Activated CD4-positive, alpha-beta T cell treated with anti-CD3 and anti-CD28 coated beads for 36 hours (primary cell): ENCODE measurements at regions of chr1 and their contacts with region 1.

Region 1: DNA sequence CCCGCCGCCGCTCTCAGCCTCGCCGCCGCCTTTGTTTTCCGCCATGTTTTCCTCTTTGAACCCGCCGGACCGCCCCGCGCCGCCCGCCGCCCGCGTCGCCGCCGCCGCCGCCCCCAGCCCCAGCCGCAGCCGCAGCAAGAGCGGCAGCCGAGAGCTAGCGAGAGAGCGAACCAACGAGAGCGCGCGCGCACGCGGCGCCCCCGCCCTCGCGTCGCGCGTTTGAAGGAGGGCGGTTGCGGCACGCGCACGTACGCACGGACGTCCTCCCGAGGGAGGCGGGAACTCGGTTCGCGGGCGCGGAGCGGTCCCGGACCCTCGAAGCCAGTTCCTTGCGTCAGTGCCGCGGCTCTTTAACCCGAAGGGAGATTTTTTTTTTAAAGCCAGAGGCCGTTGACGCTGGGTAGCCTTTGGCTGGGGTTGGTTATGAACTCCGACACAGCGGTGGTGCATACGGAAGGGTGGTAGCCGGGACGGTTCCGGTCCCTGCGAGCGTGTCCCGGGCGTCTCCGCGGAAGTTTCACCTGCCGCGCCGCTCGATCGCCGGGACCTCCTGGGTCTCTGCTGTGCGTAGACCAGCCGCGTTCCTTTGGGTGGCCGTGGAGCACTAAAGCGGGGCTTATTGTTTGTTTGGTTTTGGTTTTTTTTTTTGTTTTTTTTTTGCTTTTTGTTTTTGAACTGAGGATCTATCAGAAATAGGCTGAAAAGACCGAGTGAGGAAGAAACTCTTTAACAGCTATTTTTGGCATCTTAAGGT is at the start of gene TRIM33:
- DNase-seq: peak; percentile 95
- ATAC-seq: peak; percentile 77
- H3K4me3 Mint-ChIP-seq: peak within 1 kb of the TSS; percentile 81
- H3K27ac Mint-ChIP-seq: peak within 1 kb of the TSS; percentile 98
- H3K4me1 Mint-ChIP-seq: peaks cover 43% of the 10 kb centered on the region
- H3K27me3 Mint-ChIP-seq: no peaks in the 10 kb centered on the region
- total RNA-seq, gene TRIM33: 32.5 to 41.6 TPM

Region 2: DNA sequence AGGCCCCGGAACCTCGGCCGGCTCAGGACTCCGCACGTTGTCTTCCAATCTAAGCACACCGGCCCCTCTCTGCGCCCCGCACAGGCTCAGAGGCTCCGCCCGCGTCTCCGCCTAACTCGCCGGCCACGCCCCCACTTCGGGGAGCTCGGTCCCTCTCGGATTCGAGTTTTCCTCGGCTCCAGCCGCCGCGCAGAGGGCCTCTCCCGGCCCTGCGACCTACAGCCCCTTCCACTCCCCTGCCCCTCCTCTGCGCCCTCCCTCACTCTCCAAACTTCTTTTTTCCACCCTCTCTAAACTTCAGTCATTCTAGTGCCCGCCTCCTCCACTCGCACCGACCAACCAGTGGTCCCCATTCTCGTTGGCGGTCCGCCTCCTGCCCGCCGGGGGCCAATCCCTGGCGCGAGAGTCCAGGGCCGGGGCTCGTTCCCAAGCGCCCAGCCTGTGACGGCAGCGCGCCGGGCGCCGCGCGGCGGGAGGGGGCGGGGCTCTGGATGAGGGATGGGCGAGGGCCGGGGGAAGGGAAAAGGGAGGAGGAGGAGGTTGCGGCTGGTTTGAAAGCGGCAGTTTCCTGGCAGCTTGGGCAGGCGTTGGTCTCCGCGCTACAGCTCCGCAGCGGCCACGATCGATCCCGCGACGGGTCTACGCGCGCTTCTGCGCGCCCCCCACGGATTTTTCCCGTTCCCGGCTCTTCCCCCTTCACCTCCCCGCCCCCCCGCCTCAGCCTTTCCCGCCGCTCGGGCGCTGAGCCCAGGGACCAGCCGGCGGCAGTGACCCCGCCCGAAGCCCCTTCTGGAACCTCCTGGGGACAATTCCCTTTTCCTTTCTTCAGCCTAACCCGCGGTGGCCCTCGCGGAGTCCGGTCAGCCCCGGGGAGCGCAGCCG is 1121.0 kb before region 1 on chr1 and contains the start of gene MAGI3:
- CTCF ChIA-PET with region 1: no interaction called
- POLR2A ChIA-PET with region 1: interaction called, 7 read pairs
- intact Hi-C with region 1: loop called in 1 of 2 experiments (anchors 2 kb)
- DNase-seq: peak; percentile 97
- ATAC-seq: peak; percentile 97
- H3K4me3 Mint-ChIP-seq: peak within 1 kb of the TSS; percentile 86
- H3K27ac Mint-ChIP-seq: peak within 1 kb of the TSS; percentile 79
- H3K4me1 Mint-ChIP-seq: peaks cover 23% of the 10 kb centered on the region
- H3K27me3 Mint-ChIP-seq: peaks cover 5% of the 10 kb centered on the region
- total RNA-seq, gene MAGI3: 6.4 to 6.7 TPM

Region 3: DNA sequence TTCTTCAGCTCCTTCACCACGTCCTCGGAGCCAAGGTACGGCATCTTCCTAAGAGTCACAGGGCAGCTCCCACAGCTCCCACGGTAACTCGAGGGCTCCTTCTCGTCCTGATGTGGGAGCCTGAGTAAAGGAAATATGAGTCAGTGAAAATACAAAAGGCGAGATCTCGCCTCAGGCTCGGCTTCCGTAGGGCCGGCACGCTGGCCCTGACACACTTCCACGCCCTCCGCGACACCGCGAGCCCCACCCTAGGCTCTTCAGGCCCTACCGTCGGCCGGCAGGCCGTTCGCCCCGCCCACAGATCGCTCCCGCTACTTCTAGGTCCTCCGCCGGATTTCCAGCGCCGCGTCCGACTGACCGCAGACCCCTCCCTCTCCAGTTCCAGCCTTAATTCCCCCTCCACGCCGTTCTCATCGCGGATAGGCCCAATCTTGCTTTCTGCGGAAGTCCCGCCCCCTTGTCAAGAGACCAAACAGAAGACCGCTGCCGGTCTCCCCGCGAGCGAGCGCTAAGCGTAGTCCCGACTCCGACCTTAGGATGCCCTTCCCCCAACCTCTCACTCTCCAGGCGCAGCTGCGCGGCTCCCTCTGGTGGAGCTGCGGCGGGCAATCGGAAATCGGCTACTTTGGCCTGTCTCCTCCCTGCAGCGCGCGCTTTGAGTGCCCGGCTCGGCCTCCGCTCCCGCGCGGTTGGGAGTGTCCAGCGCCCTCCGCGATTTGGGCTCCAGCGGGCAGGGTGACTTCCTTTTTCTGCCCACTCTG is 606.4 kb before region 1 on chr1 and contains the starts of genes AP4B1 and DCLRE1B:
- CTCF ChIA-PET with region 1: no interaction called
- POLR2A ChIA-PET with region 1: interaction called, 3 read pairs
- intact Hi-C with region 1: loop called (anchors 1 kb)
- DNase-seq: peak; percentile 99
- ATAC-seq: peak; percentile 92
- H3K4me3 Mint-ChIP-seq: peak within 1 kb of the TSS; percentile 85
- H3K27ac Mint-ChIP-seq: peak within 1 kb of the TSS; percentile 96
- H3K4me1 Mint-ChIP-seq: peaks cover 55% of the 10 kb centered on the region
- H3K27me3 Mint-ChIP-seq: no peaks in the 10 kb centered on the region
- total RNA-seq, gene AP4B1: 27.7 to 39.2 TPM
- total RNA-seq, gene DCLRE1B: 18.2 to 21.8 TPM

Region 4: DNA sequence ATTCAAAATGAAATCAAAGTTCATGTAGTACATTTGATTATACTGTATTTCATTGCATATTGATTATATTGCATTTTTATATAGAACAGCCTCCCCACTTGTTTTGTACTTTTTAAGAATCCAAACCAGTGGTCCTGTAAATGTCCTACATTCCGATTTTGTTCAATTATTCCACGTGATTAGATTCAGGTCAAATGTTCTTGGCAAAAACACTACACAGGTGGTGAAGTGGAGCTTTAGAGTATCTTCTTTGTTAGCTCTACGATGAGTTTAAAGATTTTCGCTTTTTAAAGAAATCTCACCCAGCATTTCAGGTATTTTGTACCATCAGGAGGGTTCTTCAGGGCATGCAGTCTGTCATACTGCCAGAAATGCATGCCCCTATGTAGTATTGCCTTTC is 120.8 kb before region 1 on chr1:
- CTCF ChIA-PET with region 1: no interaction called
- POLR2A ChIA-PET with region 1: no interaction called
- intact Hi-C with region 1: no loop called
- DNase-seq: no peak
- ATAC-seq: no peak
- H3K4me3 Mint-ChIP-seq: no peak overlapping the region
- H3K27ac Mint-ChIP-seq: no peak overlapping the region
- H3K4me1 Mint-ChIP-seq: peaks cover 7% of the 10 kb centered on the region
- H3K27me3 Mint-ChIP-seq: no peaks in the 10 kb centered on the region

Region 5: GRCh38 chr1:114467488-114467887 is 43.7 kb before region 1 on chr1:
- CTCF ChIA-PET with region 1: no interaction called
- POLR2A ChIA-PET with region 1: no interaction called
- intact Hi-C with region 1: loop called in 1 of 2 experiments (anchors 5 kb)
- DNase-seq: no peak
- ATAC-seq: no peak
- H3K4me3 Mint-ChIP-seq: no peak overlapping the region
- H3K27ac Mint-ChIP-seq: peak overlapping the region; percentile 26
- H3K4me1 Mint-ChIP-seq: peaks cover 45% of the 10 kb centered on the region
- H3K27me3 Mint-ChIP-seq: no peaks in the 10 kb centered on the region

Region 6: DNA sequence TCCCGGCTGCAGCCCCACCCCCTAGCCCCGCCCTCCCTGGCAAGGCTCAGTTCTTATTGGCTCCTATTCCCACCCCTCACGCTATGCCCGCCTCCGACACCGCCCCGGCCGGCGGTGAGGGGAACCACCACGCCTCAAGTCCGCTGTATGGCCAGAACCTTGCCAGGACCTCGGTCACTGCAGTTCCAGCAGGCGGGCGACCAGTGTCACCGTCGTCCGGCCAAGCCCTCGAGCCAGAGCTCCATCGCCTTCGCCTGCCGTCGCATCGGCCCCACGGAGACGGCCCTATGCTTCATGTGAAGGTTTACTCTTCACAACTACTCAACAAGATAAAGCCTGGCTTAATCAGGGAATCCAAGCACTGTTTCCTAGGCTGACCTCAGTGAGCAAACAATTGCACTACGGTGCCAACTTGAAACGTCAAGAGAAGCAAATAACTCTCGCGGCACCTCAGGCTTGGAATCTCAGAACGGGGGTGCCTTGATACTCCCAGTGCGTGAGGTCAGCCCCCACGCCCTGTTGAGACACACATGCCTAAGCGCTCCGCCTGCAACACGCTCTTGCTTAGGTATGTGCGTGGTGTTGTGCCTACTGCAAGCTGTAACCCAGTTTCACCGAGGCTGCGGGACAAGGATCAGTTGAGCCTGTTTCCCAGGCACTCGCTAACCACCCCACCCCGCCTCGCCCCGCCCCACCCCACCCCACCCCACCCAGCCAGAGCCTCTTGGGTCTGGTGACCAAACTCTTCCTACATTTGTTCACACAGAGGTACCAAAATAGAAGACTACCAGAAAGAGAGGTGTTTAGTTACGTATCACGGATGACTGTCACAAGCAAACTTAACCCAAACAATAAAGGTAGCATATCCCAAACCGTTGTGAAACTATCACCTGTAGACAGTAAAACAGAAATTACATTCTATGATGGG is 159.1 kb after region 1 on chr1:
- CTCF ChIA-PET with region 1: no interaction called
- POLR2A ChIA-PET with region 1: no interaction called
- intact Hi-C with region 1: loop called (anchors 1 to 5 kb)
- DNase-seq: peak; percentile 93
- ATAC-seq: peak; percentile 97
- H3K4me3 Mint-ChIP-seq: peak overlapping the region; percentile 84
- H3K27ac Mint-ChIP-seq: peak overlapping the region; percentile 63
- H3K4me1 Mint-ChIP-seq: peaks cover 11% of the 10 kb centered on the region
- H3K27me3 Mint-ChIP-seq: peaks cover 15% of the 10 kb centered on the region